Activated CD4-positive, alpha-beta memory T cell treated with anti-CD3 and anti-CD28 coated beads for 36 hours (primary cell): ENCODE measurements at regions of chr14 and their contacts with region 1.

Region 1: DNA sequence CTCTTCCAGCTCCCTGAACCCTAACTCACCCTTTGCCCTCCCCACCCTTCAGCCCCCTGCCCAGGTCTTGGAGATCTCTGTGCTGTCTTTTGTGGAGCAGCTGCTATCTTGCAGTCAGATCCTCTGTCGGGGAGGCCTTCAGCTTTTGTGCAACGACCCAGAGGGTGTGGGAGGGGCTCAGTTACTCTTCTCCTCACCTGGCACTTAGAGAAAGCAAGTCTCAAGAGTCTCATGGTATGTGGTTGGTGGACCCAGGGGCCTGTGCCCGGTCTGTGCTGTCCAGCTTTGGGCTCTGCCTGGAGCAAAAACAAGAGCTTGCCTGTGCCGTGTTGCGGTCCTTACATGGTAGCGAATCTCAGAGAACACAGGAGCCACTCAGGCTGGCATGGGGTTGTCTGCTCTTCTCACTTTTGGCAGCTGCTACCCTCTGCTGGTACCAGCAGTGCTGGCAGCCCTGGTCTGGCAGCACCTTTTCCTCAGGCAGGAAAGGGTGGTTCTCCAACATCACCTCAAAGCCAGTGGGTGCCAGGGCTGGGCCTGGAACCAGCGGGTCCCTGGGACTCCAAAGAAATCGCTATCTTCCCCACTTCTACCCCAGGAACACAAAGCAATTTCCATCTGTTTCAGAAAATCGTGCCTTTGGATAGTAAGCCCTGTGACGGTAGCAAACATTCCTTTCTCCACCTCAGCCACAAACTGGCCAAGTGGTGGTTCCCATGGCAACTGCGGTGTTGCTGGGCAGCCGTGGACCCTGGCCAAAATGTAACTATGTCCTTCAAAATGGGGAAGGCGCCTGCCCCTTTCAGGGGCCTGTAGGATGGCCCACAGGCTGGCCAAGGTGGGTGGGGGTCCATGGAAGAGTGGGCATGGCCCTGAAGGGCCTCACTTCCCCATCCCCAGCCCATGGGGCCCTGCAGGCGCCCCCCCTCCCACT is 90.0 kb downstream of the RIN3 start:
- DNase-seq: peak; percentile 46
- H3K4me3 Mint-ChIP-seq: no peak overlapping the region
- H3K27ac Mint-ChIP-seq: no peak overlapping the region
- H3K4me1 Mint-ChIP-seq: peaks cover 5% of the 10 kb centered on the region
- H3K27me3 Mint-ChIP-seq: no peaks in the 10 kb centered on the region

Region 2: DNA sequence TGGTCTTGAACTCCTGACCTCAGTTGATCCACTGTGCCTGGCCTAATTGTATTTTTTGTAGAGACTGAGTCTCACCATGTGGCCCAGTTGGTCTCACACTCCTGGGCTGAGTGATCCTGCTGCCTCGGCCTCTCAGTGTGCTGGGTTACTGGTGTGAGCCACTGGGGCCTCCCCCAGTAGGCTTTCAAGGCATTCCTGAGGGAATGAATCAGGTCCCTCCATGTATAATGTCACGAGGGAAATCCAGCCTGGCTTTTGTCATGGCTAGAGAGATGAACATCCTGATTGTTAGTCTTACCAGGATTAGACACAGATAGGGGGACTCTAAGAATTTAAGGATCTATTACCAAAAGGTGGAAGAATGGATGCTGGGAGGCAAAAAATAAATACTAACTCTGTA is 429.9 kb before region 1 on chr14:
- CTCF ChIA-PET with region 1: no interaction called
- POLR2A ChIA-PET with region 1: no interaction called
- intact Hi-C with region 1: no loop called
- DNase-seq: no peak
- H3K4me3 Mint-ChIP-seq: no peak overlapping the region
- H3K27ac Mint-ChIP-seq: no peak overlapping the region
- H3K4me1 Mint-ChIP-seq: no peaks in the 10 kb centered on the region
- H3K27me3 Mint-ChIP-seq: no peaks in the 10 kb centered on the region

Region 3: DNA sequence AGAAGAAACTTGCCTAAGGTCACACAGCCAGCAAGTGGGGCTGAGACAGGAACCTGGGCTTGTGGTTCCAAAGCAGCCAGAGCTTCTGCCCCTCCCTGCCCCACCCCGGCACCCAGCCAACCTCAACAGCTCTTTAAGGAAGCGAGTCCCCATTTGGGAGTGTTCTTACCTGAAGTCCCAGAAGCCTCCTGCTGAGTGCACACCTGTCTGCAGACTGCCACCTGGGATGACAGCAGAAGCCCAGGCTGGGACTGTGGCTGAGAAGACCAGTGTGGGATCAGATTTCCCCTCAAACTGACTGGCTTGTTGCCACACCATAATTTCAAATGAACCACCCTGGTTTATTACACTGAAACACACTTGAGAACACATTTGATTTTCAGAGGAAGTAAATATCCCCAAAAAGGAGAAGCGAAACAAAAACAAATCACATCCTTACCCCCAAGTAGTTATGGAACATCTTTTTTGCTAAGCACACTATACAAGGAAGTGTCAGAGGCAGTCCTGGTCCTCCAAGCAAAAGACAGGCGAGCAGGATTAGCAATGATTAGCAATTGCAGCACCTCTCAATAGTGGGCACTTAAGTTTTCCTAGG is 96.3 kb before region 1 on chr14:
- CTCF ChIA-PET with region 1: no interaction called
- POLR2A ChIA-PET with region 1: no interaction called
- intact Hi-C with region 1: no loop called
- DNase-seq: no peak
- H3K4me3 Mint-ChIP-seq: no peak overlapping the region
- H3K27ac Mint-ChIP-seq: no peak overlapping the region
- H3K4me1 Mint-ChIP-seq: peaks cover 1% of the 10 kb centered on the region
- H3K27me3 Mint-ChIP-seq: peaks cover 7% of the 10 kb centered on the region

Region 4: DNA sequence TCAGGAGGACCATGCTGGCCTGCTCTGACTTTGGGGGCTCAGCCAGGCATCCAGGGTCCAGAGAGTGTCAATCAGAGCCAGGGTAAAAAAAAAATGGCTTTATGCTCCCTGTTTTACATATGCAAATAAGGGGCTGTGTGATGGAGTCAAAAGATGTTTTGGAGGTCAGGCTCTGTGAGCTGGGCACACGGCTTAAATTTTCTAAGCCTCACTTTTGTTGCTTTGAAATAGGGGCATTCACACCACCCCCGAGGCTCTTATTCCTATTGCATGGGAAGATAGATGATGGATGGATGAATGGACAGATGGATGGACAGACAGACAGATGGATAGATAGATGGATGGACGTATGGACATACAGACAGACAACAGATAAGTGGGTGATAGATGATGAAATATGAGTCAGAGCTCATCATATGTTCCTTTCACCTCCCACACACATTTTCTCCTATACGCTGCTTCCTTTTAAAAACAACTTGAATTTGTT is 47.3 kb before region 1 on chr14:
- CTCF ChIA-PET with region 1: no interaction called
- POLR2A ChIA-PET with region 1: no interaction called
- intact Hi-C with region 1: loop called (anchors 5 kb)
- DNase-seq: no peak
- H3K4me3 Mint-ChIP-seq: no peak overlapping the region
- H3K27ac Mint-ChIP-seq: no peak overlapping the region
- H3K4me1 Mint-ChIP-seq: peaks cover 39% of the 10 kb centered on the region
- H3K27me3 Mint-ChIP-seq: peaks cover 4% of the 10 kb centered on the region

Region 5: GRCh38 chr14:92582706-92583452 is 20.7 kb before region 1 on chr14:
- CTCF ChIA-PET with region 1: no interaction called
- POLR2A ChIA-PET with region 1: no interaction called
- intact Hi-C with region 1: no loop called
- DNase-seq: peak; percentile 39
- H3K4me3 Mint-ChIP-seq: no peak overlapping the region
- H3K27ac Mint-ChIP-seq: no peak overlapping the region
- H3K4me1 Mint-ChIP-seq: peaks cover 60% of the 10 kb centered on the region
- H3K27me3 Mint-ChIP-seq: no peaks in the 10 kb centered on the region

Region 6: GRCh38 chr14:92625213-92625612 is 21.6 kb after region 1 on chr14:
- CTCF ChIA-PET with region 1: no interaction called
- POLR2A ChIA-PET with region 1: no interaction called
- intact Hi-C with region 1: no loop called
- DNase-seq: no peak
- H3K4me3 Mint-ChIP-seq: no peak overlapping the region
- H3K27ac Mint-ChIP-seq: no peak overlapping the region
- H3K4me1 Mint-ChIP-seq: no peaks in the 10 kb centered on the region
- H3K27me3 Mint-ChIP-seq: no peaks in the 10 kb centered on the region